Activated CD4-positive, alpha-beta T cell treated with anti-CD3 and anti-CD28 coated beads for 36 hours (primary cell): ENCODE measurements at regions of chr11 and their contacts with region 1.

Region 1: DNA sequence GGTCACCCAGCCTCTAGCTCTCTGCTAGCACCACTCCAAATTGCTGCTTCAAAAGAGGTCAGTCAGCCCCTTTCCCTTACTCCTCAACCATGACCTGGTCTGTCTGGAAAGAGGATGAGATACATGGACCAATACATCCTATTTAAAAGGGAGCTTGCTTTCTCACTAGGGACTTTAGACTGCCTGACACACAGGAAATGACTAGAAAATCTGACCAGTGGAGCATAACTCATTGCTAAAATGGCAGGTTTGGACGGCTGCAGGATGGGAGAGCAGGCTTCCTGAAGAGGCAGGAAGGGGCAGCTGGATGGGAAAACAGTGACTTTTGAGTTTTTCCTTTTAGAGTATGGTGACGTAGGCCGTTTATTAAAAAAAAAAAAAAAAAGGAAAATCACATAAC is 25.3 kb downstream of the STIM1 start:
- DNase-seq: no peak
- ATAC-seq: no peak
- H3K4me3 Mint-ChIP-seq: no peak overlapping the region
- H3K27ac Mint-ChIP-seq: peak overlapping the region; percentile 79
- H3K4me1 Mint-ChIP-seq: peaks cover 76% of the 10 kb centered on the region
- H3K27me3 Mint-ChIP-seq: no peaks in the 10 kb centered on the region

Region 2: GRCh38 chr11:3914805-3915204 is 34.1 kb after region 1 on chr11:
- CTCF ChIA-PET with region 1: no interaction called
- POLR2A ChIA-PET with region 1: no interaction called
- intact Hi-C with region 1: loop called in 1 of 2 experiments (anchors 2 kb)
- DNase-seq: no peak
- ATAC-seq: no peak
- H3K4me3 Mint-ChIP-seq: no peak overlapping the region
- H3K27ac Mint-ChIP-seq: no peak overlapping the region
- H3K4me1 Mint-ChIP-seq: peaks cover 64% of the 10 kb centered on the region
- H3K27me3 Mint-ChIP-seq: no peaks in the 10 kb centered on the region

Region 3: DNA sequence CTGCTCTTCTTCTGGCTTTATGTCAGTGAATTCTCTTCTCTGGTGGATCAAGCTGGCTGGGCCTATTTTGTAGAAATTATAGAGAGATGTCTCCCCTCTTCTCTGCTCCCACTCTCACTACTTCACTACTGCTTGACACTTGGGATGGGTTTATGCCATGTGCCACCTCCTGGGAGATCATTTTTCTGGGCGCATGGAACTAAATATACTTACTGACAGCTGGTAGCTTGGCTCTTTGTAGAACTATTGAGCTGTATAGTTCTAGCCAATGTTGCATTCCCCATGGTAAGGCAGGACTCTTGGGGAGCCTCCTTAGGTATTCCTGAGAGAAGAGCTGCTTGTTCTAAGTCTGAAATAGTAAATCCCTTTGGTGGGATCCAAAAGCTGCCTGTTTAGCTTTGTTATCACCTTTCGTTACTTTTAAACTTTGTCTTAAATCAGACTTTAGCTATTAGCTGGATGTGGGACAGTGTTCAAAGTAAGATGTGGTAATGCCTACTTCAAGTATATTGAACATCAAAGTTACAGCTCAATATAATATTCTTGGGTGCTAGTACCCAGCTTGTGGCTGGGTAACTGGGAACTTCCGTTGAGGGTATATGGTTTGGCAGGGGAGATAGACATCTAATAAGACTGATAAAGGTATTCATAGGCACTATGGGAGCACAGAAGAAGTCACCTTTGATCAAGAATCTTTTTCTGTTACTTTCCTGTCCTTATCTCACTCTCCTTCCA is 126.4 kb after region 1 on chr11:
- CTCF ChIA-PET with region 1: no interaction called
- POLR2A ChIA-PET with region 1: no interaction called
- intact Hi-C with region 1: no loop called
- DNase-seq: no peak
- ATAC-seq: no peak
- H3K4me3 Mint-ChIP-seq: no peak overlapping the region
- H3K27ac Mint-ChIP-seq: no peak overlapping the region
- H3K4me1 Mint-ChIP-seq: peaks cover 29% of the 10 kb centered on the region
- H3K27me3 Mint-ChIP-seq: no peaks in the 10 kb centered on the region